ENCODE measurements at regions of chr5 and their contacts with region 1.

Region 1: GRCh38 chr5:131536211-131536826 is 98.7 kb downstream of the RAPGEF6 start:
- DNase-seq: no peak
- ATAC-seq: peak in 7 of 8 donors; percentile 47 to 76 (median 64)
- H3K4me3 ChIP-seq: no peak overlapping the region
- H3K27ac ChIP-seq: peak overlapping the region in 1 of 10 donors; percentile 12
- H3K4me1 ChIP-seq: peaks cover 0 to 51% (median 13%) of the 10 kb centered on the region in 9 donors
- H3K27me3 ChIP-seq: no peaks in the 10 kb centered on the region
- CTCF ChIP-seq: no peak

Region 2: GRCh38 chr5:129664337-129664937 is 1871.9 kb before region 1 on chr5:
- intact Hi-C with region 1: loop called in 1 of 10 experiments (anchors 5 kb)
- DNase-seq: peak in 1 of 2 donors; percentile 31
- ATAC-seq: no peak
- H3K4me3 ChIP-seq: no peak overlapping the region
- H3K27ac ChIP-seq: no peak overlapping the region
- H3K4me1 ChIP-seq: no peaks in the 10 kb centered on the region
- H3K27me3 ChIP-seq: no peaks in the 10 kb centered on the region
- CTCF ChIP-seq: peak; percentile 43 to 75 (median 68)

Region 3: GRCh38 chr5:130424341-130424740 is 1112.0 kb before region 1 on chr5:
- intact Hi-C with region 1: no loop called
- DNase-seq: no peak
- ATAC-seq: no peak
- H3K4me3 ChIP-seq: no peak overlapping the region
- H3K27ac ChIP-seq: no peak overlapping the region
- H3K4me1 ChIP-seq: no peaks in the 10 kb centered on the region
- H3K27me3 ChIP-seq: no peaks in the 10 kb centered on the region
- CTCF ChIP-seq: no peak

Region 4: DNA sequence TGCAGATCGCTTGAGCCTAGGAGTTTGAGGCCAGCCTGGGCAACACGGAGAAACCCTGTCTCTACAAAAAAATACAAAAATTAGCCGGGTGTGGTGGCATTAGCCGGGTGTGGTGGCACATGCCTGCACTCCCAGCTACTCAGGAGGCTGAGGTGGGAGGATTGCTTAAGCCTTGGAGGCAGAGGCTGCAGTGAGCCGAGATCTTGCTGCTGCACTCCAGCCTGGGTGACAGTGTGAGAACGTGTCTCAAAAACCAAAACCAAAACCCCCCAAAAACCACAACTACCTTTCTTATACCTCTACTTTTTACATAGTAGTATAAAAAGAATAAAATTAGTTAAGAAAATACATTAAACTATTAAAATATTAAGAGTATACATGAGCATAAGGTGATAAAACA is 22.5 kb before region 1 on chr5:
- intact Hi-C with region 1: loop called in 1 of 10 experiments (anchors 1 kb)
- DNase-seq: no peak
- ATAC-seq: no peak
- H3K4me3 ChIP-seq: no peak overlapping the region
- H3K27ac ChIP-seq: peak overlapping the region in 1 of 10 donors; percentile 69
- H3K4me1 ChIP-seq: peaks cover 0 to 24% (median 7%) of the 10 kb centered on the region in 9 donors
- H3K27me3 ChIP-seq: no peaks in the 10 kb centered on the region
- CTCF ChIP-seq: no peak

Region 5: DNA sequence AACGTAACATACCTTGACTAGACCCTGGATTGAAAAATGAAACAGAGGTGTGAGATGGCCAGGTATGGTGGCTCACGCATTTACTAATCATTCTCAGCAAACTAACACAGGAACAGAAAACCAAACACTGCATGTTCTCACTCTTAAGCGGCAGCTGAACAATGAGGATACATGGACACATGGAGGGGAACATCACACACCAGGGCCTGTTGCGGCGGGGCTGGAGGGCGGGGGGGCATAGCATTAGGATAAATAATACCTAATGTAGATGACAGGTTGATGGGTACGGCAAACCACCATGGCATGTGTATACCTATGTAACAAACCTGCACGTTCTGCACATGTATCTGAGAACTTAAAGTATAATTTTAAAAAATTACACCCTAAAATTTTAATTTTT is 82.8 kb after region 1 on chr5:
- intact Hi-C with region 1: no loop called
- DNase-seq: no peak
- ATAC-seq: no peak
- H3K4me3 ChIP-seq: no peak overlapping the region
- H3K27ac ChIP-seq: no peak overlapping the region
- H3K4me1 ChIP-seq: peaks cover 2 to 44% (median 17%) of the 10 kb centered on the region in 9 donors
- H3K27me3 ChIP-seq: no peaks in the 10 kb centered on the region
- CTCF ChIP-seq: no peak

Measured in heart right ventricle (tissue), 16 donors.